Right cardiac atrium (tissue), 5 donors: ENCODE measurements at regions of chrX and their contacts with region 1.

Region 1: GRCh38 chrX:19887911-19888879 is 795 bp upstream of the SH3KBP1 start:
- DNase-seq: peak; percentile 50 to 77 (median 71)
- ATAC-seq: peak; percentile 82 to 85
- H3K4me3 ChIP-seq: peak overlapping the region; percentile 86
- H3K27ac ChIP-seq: peak overlapping the region; percentile 50
- H3K4me1 ChIP-seq: peaks cover 2% of the 10 kb centered on the region
- H3K27me3 ChIP-seq: no peaks in the 10 kb centered on the region

Region 2: DNA sequence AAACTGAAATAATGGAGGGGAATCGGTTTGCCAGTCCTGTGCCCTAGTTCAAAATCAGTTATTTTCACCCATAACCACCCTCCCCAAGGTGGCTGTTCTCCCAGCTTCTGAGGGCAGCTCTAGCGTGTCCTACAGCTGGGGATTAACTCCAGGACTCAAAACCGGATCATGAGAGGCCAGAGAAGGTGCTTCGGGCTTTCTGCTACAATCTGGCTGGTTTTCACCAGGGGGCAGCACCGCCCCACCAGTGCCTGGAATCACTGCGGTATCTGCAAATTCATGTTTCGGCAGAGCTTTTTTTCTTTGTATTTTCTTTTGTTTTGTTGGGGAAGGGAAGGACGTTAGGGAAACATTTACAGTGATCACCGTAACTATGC is 516.0 kb before region 1 on chrX:
- intact Hi-C with region 1: loop called in 1 of 4 experiments (anchors 5 kb)
- DNase-seq: peak; percentile 48 to 81 (median 78)
- ATAC-seq: peak; percentile 72 to 74
- H3K4me3 ChIP-seq: peak overlapping the region; percentile 36
- H3K27ac ChIP-seq: no peak overlapping the region
- H3K4me1 ChIP-seq: no peaks in the 10 kb centered on the region
- H3K27me3 ChIP-seq: no peaks in the 10 kb centered on the region

Region 3: DNA sequence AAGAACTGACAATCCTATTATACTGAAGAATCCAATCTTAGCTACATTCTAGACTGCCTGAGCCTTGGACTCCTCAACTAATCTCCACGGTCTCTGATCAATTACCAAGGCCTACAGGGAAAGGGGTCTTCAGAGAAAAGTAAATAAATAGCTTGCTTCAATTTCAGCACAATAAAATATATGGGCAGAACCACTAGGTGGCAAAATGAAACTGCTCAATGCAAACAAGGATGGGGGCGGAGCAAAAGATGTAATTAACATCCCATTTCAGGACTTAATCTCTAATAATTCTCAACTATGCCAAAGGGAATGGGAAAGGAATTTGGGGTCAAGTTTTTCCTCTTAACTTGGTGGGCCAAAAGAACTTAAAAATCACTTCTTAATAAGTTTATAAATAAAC is 294.5 kb before region 1 on chrX:
- intact Hi-C with region 1: loop called in 2 of 4 experiments (anchors 5 to 10 kb)
- DNase-seq: no peak
- ATAC-seq: no peak
- H3K4me3 ChIP-seq: no peak overlapping the region
- H3K27ac ChIP-seq: no peak overlapping the region
- H3K4me1 ChIP-seq: no peaks in the 10 kb centered on the region
- H3K27me3 ChIP-seq: no peaks in the 10 kb centered on the region

Region 4: DNA sequence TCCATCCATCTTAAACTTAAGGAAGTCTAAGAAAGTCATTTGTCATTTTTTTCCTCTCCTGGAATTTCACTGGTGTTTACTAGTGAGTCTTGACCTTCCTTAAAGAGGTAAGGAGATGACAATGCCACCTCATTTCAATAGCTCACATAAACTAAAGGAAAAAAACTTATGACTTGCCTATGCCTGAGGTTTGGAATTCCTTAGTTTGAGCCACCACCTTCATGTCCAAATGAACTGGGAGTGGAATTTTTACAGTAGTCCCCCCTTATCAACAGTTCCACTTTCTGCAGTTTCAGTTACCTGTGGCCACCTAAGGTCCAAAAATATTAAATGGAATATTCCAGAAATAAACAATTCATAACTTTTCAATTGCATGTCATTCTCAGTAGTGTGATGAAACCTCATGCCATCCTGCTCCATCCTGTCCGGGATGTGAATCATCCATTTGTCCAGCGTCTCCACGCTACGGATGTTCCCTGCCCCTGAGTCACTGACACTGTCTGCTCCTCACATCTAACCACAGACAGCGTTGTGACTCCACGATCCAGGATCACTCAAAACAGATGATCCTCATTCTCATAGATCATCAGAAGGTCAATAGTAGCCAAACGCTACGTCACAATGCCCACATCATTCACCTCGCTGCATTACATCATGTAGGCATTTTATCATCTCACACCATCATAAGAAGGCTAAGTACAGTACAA is 178.2 kb before region 1 on chrX:
- intact Hi-C with region 1: no loop called
- DNase-seq: no peak
- ATAC-seq: no peak
- H3K4me3 ChIP-seq: no peak overlapping the region
- H3K27ac ChIP-seq: no peak overlapping the region
- H3K4me1 ChIP-seq: peaks cover 4% of the 10 kb centered on the region
- H3K27me3 ChIP-seq: no peaks in the 10 kb centered on the region

Region 5: DNA sequence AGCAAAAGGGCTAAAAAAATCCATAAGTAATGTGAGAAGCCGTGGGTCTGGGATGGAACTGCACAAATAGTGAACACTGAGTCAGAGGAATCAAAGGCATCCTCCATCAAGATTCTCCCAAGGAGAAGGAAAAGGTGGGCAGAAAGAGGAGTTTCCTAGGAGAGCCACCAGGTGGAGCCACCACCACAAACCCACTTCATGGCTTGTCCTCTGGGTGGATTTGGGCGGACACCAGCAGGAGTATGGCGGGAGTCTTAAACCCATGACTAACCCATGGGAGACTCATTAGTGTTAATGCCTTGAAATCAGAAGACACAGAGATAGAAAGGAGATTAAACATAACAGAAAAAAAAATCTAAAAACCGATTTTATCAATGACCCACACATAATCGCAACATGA is 148.5 kb before region 1 on chrX:
- intact Hi-C with region 1: loop called in 2 of 4 experiments (anchors 10 kb)
- DNase-seq: peak; percentile 54 to 66 (median 64)
- ATAC-seq: peak; percentile 51 to 56
- H3K4me3 ChIP-seq: no peak overlapping the region
- H3K27ac ChIP-seq: no peak overlapping the region
- H3K4me1 ChIP-seq: no peaks in the 10 kb centered on the region
- H3K27me3 ChIP-seq: no peaks in the 10 kb centered on the region